ENCODE measurements at regions of chr2 and their contacts with region 1.

Region 1: DNA sequence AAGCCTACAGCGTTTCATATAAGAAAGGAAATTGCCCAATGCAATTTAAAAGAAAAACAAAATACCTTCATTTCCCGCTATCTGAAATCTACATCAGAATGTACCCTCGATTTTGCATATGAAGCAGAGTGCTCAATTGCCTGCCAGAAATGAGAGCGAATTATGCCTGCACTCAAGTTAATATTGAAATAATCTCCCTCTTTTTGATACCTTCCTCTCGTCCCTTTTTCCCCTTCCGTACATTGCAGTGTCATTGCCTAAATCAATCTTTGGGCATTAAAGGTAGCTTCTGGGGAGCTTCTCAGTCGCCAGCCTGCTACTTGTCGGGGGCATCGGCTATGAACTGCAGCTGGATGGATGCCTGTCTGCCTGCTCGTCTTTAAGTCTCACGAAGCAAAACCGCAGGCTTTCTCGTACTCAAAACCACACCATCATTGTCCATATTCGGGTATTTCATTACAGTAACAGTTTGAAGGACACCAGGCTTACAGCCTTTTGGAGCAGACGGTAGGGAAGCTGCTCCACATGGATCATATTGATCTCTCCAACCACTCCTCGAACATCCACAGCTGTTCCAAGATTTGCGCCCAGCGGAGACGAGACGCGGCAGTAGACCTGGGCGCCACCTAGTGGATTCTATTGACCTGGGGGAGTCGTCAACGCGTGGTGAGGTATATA is 64.0 kb upstream of the HNRNPA3 start:
- DNase-seq: peak in 9 of 10 donors; percentile 51 to 94 (median 72)

Region 2: GRCh38 chr2:176325732-176326131 is 822.9 kb before region 1 on chr2:
- intact Hi-C with region 1: no loop called
- DNase-seq: no peak

Region 3: DNA sequence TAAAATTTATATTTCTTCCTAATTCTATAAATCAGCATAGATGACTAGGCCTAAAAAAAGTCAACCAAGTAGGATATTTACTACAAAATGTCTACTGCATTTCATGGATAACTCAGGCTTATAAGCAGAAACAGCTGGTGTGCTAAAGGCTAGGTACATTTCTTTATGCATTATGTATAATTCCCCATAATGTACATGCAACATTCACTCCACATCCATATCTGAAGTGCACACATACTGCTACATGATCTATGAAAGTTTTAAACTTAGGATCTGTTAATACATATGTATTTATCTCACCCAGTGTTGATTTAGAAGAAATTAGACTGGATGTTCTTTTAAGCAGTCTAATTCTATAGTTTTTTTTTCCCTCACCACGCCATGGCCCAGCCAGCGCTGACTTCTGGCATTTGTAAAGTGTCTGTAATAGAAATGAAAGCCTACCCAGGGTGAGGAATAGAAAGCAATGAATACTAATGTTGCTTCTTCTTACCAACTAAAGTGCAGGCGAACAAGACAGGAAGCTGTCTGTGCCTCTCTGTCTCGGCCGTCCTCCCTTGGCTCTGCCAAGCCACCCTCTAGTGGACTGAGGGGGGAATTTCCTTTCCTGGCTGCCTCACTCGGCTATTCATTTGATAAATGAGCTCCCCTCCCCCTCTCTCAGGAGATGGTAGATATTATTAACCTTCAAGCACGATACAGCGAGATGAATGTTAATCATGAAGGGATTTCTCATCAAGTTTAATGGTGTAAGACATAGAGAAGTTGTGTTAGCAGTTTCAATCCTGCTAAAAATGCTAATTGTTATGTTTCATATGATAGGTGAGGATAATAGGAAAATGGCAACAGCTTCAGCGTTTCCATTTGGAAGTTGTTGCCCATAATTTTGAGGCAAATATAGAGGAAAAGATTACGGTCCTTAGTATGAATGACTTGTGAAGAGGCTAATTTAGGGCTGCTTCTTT is 494.9 kb before region 1 on chr2:
- intact Hi-C with region 1: loop called (anchors 5 kb)
- DNase-seq: peak in 8 of 10 donors; percentile 12 to 89 (median 41)

Region 4: GRCh38 chr2:176821345-176821744 is 327.3 kb before region 1 on chr2:
- intact Hi-C with region 1: loop called (anchors 5 kb)
- DNase-seq: no peak